Caco-2 (cell line): ENCODE measurements at regions of chr4 and their contacts with region 1.

Region 1: GRCh38 chr4:94571298-94571697 is 119.6 kb downstream of the PDLIM5 start:
- DNase-seq: no peak
- H3K4me3 ChIP-seq: no peak overlapping the region
- H3K4me3 Mint-ChIP-seq: no peak overlapping the region
- H3K27ac Mint-ChIP-seq: no peak overlapping the region
- H3K4me1 ChIP-seq: peaks cover 20% of the 10 kb centered on the region
- H3K4me1 Mint-ChIP-seq: peaks cover 15% of the 10 kb centered on the region
- H3K27me3 ChIP-seq: no peaks in the 10 kb centered on the region
- H3K27me3 Mint-ChIP-seq: no peaks in the 10 kb centered on the region
- CTCF ChIP-seq: peak in 1 of 2 experiments; percentile 12

Region 2: DNA sequence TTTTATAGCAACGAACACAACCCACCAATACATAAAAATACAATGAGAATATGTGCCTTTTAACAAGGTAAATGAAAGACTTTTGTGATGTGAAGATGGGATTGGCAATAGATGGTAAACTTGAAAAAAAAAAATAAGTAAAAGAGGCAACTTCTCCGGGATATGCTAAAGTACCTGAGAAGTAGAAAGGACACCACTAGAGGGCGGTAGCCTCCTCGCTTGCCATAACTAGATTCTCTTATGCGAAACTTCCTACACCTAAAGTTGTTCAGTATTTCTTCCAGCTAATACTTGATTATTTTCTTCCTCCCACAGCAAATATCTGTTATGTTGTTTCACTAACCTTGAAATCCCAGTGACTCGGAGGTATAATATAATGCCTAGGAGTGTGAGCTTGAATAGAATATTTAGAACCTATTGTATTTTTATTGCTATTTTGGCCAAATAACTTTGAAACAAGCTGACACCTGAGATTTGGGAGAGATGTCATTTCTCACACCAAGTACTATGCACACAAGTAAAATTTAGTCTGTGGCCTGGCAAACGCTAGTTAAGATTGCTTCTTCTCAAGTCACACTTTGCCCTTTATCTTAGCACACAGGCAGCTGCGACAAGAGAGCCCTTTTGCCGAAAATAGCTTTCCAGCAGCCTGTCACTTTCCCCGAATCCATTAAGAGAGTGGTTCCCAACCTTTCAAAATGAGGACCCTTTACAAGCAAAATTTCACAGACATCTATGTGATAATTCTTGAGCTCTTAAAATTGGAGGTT is 164.4 kb before region 1 on chr4:
- CTCF ChIA-PET with region 1: no interaction called
- POLR2A ChIA-PET with region 1: no interaction called
- intact Hi-C with region 1: loop called (anchors 1 kb)
- DNase-seq: peak; percentile 65 to 75
- H3K4me3 ChIP-seq: no peak overlapping the region
- H3K4me3 Mint-ChIP-seq: no peak overlapping the region
- H3K27ac Mint-ChIP-seq: no peak overlapping the region
- H3K4me1 ChIP-seq: peaks cover 9% of the 10 kb centered on the region
- H3K4me1 Mint-ChIP-seq: peaks cover 7% of the 10 kb centered on the region
- H3K27me3 ChIP-seq: no peaks in the 10 kb centered on the region
- H3K27me3 Mint-ChIP-seq: no peaks in the 10 kb centered on the region
- CTCF ChIP-seq: peak; percentile 76 to 82